Mammary epithelial cell (primary cell): ENCODE measurements at regions of chr11 and their contacts with region 1.

Region 1: GRCh38 chr11:64225612-64226506 is at the starts of genes NUDT22 and TRPT1:
- DNase-seq: peak; percentile 75
- H3K4me3 ChIP-seq: peak within 1 kb of the TSS; percentile 60 to 94 (median 82)
- H3K27ac ChIP-seq: no peak within 1 kb of the TSS
- H3K4me1 ChIP-seq: peaks cover 51% of the 10 kb centered on the region
- H3K27me3 ChIP-seq: no peaks in the 10 kb centered on the region
- CTCF ChIP-seq: peak; percentile 17 to 55
- total RNA-seq, gene NUDT22: 52.5 to 64.7 TPM
- total RNA-seq, gene TRPT1: 21.5 to 36.0 TPM

Region 2: GRCh38 chr11:63906585-63906984 is 319.3 kb before region 1 on chr11:
- CTCF ChIA-PET with region 1: no interaction called
- dilution Hi-C with region 1: no loop called
- in situ Hi-C with region 1: no loop called
- intact Hi-C with region 1: no loop called
- DNase-seq: no peak
- H3K4me3 ChIP-seq: no peak overlapping the region
- H3K27ac ChIP-seq: no peak overlapping the region
- H3K4me1 ChIP-seq: no peaks in the 10 kb centered on the region
- H3K27me3 ChIP-seq: no peaks in the 10 kb centered on the region
- CTCF ChIP-seq: peak in 1 of 2 donors; percentile 29

Region 3: GRCh38 chr11:64185816-64186498 is 39.9 kb before region 1 on chr11 and contains the start of gene STIP1:
- CTCF ChIA-PET with region 1: no interaction called
- dilution Hi-C with region 1: no loop called
- in situ Hi-C with region 1: no loop called
- intact Hi-C with region 1: loop called (anchors 5 kb)
- DNase-seq: peak; percentile 100
- H3K4me3 ChIP-seq: peak within 1 kb of the TSS; percentile 45 to 72 (median 72)
- H3K27ac ChIP-seq: peak within 1 kb of the TSS; percentile 55
- H3K4me1 ChIP-seq: peaks cover 14% of the 10 kb centered on the region
- H3K27me3 ChIP-seq: no peaks in the 10 kb centered on the region
- CTCF ChIP-seq: peak in 1 of 2 donors; percentile 64
- total RNA-seq, gene STIP1: 105 to 173 TPM

Region 4: GRCh38 chr11:64240394-64241174 is 14.7 kb after region 1 on chr11 and contains the start of gene FKBP2:
- CTCF ChIA-PET with region 1: no interaction called
- dilution Hi-C with region 1: no loop called
- in situ Hi-C with region 1: no loop called
- intact Hi-C with region 1: loop called (anchors 1 kb)
- DNase-seq: peak; percentile 97
- H3K4me3 ChIP-seq: peak within 1 kb of the TSS; percentile 79 to 92 (median 85)
- H3K27ac ChIP-seq: peak within 1 kb of the TSS; percentile 95
- H3K4me1 ChIP-seq: peaks cover 45% of the 10 kb centered on the region
- H3K27me3 ChIP-seq: no peaks in the 10 kb centered on the region
- CTCF ChIP-seq: no peak
- total RNA-seq, gene FKBP2: 15.5 to 59.6 TPM